Activated CD4-positive, alpha-beta memory T cell treated with anti-CD3 and anti-CD28 coated beads for 36 hours (primary cell): ENCODE measurements at regions of chr20 and their contacts with region 1.

Region 1: DNA sequence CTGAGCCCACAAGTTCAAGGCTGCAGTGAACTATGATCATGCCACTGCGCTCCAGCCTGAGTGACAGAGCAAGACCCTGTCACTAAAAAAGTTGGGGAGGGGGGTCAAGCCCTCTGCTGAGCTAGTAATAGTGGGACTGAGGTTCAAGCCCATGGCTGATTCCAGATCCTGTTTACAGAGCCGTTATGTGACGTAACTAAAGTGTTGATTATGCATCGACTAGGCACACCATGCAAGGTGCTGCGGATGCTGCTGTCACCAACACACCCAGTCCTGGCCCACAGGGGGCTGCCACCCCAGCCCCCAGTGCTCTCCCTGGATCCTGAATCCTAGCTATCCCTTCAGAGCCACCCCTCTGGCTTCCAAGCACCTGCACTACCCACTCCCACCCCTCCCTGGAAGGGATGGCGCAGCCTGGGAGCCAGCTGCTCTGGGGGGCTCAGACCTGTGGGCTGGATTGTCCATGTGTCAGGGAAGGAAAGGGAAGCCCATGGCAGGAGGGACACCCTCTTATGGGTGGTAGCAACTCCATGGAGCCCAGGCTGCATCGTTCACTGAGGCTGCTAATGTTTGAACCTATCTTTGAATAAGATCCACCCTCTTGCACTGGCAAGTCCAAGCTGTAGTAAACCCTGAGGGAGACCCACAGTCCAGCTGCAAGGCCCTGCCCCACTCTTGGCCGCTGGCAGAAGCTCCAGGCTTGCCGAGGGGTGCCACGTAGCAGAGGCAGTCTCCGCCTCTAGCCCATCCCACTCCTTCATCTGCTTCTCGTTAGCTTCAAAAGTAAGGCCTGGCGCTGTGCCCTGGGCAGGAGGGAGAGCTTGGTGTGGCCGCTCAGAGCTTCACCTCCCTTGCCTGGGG is 95.0 kb downstream of the SNX5 start:
- DNase-seq: no peak
- H3K4me3 Mint-ChIP-seq: no peak overlapping the region
- H3K27ac Mint-ChIP-seq: no peak overlapping the region
- H3K4me1 Mint-ChIP-seq: peaks cover 13% of the 10 kb centered on the region
- H3K27me3 Mint-ChIP-seq: peaks cover 4% of the 10 kb centered on the region

Region 2: DNA sequence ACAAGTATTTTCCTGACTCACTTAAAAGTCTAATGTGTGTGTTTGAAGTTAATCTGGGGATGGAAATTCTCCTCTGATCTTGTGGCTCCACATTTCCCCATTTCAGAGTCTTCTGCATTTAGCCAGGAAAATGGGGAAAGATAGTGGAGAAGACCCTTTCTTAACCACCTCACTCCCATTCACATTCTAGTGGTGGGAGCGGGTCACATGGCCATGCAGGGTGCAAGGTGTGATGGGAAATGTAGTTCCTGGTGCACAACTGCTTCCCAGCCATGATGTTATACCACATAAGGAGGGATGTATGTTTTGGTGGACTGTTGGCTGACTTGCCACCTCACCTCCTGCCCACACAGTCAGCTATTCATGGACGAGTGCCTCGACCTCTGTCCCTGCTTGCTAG is 112.0 kb before region 1 on chr20:
- CTCF ChIA-PET with region 1: no interaction called
- POLR2A ChIA-PET with region 1: no interaction called
- intact Hi-C with region 1: loop called (anchors 10 kb)
- DNase-seq: no peak
- H3K4me3 Mint-ChIP-seq: no peak overlapping the region
- H3K27ac Mint-ChIP-seq: no peak overlapping the region
- H3K4me1 Mint-ChIP-seq: no peaks in the 10 kb centered on the region
- H3K27me3 Mint-ChIP-seq: peaks cover 3% of the 10 kb centered on the region

Region 3: DNA sequence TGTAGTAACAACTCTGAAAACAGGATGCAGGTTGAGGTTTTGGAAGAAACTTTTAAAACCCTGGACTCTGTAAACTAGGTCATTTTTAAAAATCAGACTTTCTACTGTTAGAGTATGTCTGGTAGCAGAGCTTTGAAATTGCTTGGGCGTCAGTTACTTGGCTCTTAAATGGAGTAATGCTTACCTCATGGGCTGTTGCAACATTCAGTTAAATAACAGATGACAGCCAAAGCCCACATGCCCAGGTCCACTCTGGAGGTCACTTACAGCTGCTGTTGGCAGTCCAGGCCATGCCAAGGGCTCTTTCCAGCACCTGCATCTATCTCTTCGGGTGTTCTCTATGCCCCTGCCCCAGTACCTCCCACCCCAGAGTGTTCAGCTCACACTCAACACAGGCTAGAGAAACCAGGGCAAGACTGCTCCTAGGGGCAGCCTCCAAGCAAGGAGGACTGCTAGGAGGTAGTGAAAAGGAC is 77.5 kb before region 1 on chr20:
- CTCF ChIA-PET with region 1: no interaction called
- POLR2A ChIA-PET with region 1: no interaction called
- intact Hi-C with region 1: no loop called
- DNase-seq: no peak
- H3K4me3 Mint-ChIP-seq: no peak overlapping the region
- H3K27ac Mint-ChIP-seq: no peak overlapping the region
- H3K4me1 Mint-ChIP-seq: no peaks in the 10 kb centered on the region
- H3K27me3 Mint-ChIP-seq: peaks cover 4% of the 10 kb centered on the region

Region 4: GRCh38 chr20:17904027-17904426 is 30.4 kb after region 1 on chr20:
- CTCF ChIA-PET with region 1: no interaction called
- POLR2A ChIA-PET with region 1: no interaction called
- intact Hi-C with region 1: no loop called
- DNase-seq: peak; percentile 41
- H3K4me3 Mint-ChIP-seq: no peak overlapping the region
- H3K27ac Mint-ChIP-seq: no peak overlapping the region
- H3K4me1 Mint-ChIP-seq: peaks cover 5% of the 10 kb centered on the region
- H3K27me3 Mint-ChIP-seq: peaks cover under 1% of the 10 kb centered on the region

Region 5: DNA sequence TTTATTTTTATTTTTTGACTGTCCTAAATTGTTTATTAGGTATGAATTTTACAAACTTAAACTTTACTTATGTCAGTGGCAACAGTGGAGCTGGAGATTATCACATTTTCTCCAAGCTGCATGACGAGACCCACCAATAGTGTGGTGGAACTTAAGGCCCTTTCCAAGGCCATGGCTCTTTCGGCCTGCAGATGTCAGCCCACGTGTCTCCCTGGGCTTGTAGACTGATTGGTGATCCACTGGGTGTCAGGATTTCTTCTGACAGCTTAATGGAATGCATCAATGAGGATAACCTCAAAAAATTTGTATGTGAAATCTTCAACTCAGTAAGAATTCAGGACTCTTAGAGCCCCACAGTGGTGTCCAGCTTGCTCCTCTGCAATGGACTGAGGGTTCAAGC is 216.4 kb after region 1 on chr20:
- CTCF ChIA-PET with region 1: no interaction called
- POLR2A ChIA-PET with region 1: no interaction called
- intact Hi-C with region 1: no loop called
- DNase-seq: no peak
- H3K4me3 Mint-ChIP-seq: no peak overlapping the region
- H3K27ac Mint-ChIP-seq: no peak overlapping the region
- H3K4me1 Mint-ChIP-seq: no peaks in the 10 kb centered on the region
- H3K27me3 Mint-ChIP-seq: peaks cover 4% of the 10 kb centered on the region